PC-9 (cell line): ENCODE measurements at regions of chr11 and their contacts with region 1.

Region 1: DNA sequence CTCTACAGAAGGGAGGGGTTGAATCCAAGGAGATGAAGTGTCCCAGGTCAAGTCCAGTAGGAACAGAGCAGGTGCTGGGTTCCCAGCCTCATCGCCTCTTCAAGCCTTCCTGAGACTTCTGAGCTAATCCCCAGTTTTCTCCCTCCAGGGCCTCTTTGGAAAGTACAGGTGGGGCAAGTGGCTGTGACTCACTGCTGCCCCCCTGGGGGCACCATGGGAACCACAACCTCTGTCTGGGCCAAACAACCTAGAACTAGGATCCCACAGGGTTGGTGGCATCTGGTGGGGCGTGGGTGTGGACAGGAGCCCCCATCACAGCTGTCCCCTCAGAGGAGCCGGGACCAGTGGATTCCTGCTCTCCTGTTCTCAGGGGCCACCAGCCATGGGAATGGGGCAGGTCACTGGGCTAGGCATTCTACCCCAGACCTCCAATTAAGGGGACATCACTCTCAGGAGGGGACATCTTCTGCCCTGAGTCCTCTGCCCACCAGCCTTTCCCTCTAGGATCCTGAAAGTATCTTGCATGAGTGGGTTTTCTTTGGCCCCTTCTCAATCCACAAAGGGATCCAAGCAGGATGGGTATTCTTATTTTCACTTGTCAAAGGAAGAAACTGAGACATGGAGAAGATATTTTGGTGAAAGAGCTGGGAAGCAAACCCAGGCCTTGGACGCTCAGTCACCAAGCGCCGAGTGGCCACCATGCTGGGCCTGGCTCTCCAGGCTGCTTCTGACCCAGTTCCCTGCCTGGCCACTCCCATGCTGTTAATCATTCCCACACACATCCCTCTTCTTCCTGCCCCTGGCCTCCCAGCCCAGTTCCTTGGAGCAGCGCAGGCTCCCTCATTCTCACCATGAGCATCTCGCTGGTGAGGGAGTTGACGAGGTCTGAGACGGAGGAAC is 23.8 kb downstream of the LRRC10B start:
- DNase-seq: peak in 1 of 2 experiments; percentile 69
- H3K4me3 ChIP-seq: no peak overlapping the region
- H3K27ac ChIP-seq: no peak overlapping the region
- H3K4me1 ChIP-seq: no peaks in the 10 kb centered on the region
- H3K27me3 ChIP-seq: peaks cover 22% of the 10 kb centered on the region; the same call in 1 of the 2 replicates
- CTCF ChIP-seq: peak; percentile 94

Region 2: DNA sequence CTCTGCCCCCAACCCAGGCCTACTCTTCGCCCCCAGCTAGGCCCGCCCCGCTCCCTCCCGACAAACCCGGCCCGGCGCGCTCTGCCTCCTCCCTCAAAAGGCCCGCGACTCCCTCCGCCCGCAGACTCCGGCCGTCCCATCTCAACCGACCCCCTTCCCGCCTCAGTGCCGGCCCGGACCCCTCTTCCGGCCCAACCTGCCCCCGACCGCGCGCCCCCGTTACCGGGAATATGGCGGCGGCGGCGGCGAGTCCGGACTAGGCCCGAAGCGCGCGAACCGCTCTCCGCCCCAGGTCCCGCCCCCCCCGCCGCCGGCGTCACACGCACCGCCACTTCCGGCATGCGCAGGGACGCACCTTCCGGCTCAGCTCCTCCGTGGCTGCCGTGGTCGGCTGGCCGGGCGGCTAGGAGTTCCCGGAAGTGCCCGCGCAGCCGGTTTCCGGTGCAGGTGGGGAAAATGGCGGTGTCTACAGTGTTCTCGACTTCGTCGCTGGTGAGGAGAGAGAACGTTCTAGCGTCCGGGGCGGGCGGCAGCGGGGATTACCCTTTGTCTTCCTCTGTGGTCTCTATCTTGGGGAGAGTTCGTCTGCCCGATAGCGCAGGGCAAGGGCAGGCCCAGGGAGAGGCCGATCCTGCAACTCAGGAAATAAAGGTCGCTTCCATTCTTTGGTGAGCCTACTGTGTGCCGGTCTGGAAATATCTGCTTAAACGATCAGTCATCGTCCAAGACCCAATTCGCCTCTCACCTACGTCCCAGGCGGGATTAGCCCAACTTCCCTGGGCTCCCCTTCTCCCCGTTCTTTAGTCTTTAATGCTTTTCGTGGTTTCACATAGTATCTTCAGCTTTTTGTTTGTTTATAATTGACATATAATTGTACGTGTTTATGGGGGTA is 102.5 kb before region 1 on chr11 and contains the starts of genes CPSF7 and SDHAF2:
- CTCF ChIA-PET with region 1: no interaction called
- POLR2A ChIA-PET with region 1: interaction called, 10 read pairs
- intact Hi-C with region 1: no loop called
- DNase-seq: peak; percentile 89 to 97
- H3K4me3 ChIP-seq: peak within 1 kb of the TSS; percentile 97
- H3K27ac ChIP-seq: peak within 1 kb of the TSS; percentile 86
- H3K4me1 ChIP-seq: peaks cover 33% of the 10 kb centered on the region
- H3K27me3 ChIP-seq: no peaks in the 10 kb centered on the region
- CTCF ChIP-seq: 0 out of 2 replicates have a peak, but pooled peaks have one; percentile 9
- total RNA-seq, gene CPSF7: 82.7 and 87.0 TPM in 2 replicates
- total RNA-seq, gene SDHAF2: 32.5 and 38.3 TPM in 2 replicates

Region 3: GRCh38 chr11:61446211-61446651 is 86.2 kb before region 1 on chr11:
- CTCF ChIA-PET with region 1: interaction called, 9 read pairs
- POLR2A ChIA-PET with region 1: no interaction called
- intact Hi-C with region 1: loop called (anchors 1 kb)
- DNase-seq: peak; percentile 82 to 90
- H3K4me3 ChIP-seq: no peak overlapping the region
- H3K27ac ChIP-seq: no peak overlapping the region
- H3K4me1 ChIP-seq: no peaks in the 10 kb centered on the region
- H3K27me3 ChIP-seq: no peaks in the 10 kb centered on the region
- CTCF ChIP-seq: peak; percentile 91

Region 4: DNA sequence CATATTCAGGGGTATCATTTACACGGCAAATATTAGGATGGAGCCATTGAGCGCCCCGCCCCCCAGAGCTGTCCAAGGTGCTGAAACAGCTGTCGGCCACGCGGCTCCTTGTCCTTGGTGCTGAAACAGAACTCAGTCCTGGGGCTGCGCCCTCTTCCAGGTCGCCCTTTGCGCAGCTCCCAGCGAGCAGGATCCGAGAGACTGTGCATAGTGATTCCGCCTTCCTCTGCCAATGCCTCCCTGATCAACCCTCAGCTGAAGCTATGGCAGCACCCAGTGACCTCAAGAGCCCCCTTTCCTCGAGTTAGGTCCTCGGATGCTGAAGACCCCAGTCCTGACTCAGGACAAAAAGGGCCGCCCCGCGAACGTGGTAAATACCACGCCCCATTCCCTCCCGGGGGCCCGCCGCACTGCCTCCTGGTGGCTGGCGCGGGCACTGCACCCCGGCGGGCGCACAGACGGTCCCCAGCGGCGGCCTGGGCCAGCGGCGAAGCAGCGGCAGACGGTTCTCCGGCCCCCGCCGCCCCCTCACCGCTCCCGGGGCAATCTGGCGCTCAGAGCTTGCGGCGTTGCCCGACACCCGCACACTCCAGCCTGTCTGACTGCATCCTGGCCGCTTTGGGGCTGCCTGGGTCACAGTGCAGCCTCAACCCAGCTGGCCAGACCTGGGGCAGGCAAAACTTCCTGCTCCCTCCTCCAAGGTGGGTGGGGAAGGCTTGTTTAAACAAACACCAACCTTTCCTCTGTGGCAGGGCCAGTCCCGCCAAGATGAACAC is 35.1 kb after region 1 on chr11:
- CTCF ChIA-PET with region 1: no interaction called
- POLR2A ChIA-PET with region 1: no interaction called
- intact Hi-C with region 1: loop called (anchors 5 kb)
- DNase-seq: peak; percentile 78 to 86
- H3K4me3 ChIP-seq: peak overlapping the region; percentile 13; the same call in 1 of the 2 replicates
- H3K27ac ChIP-seq: no peak overlapping the region
- H3K4me1 ChIP-seq: peaks cover 7% of the 10 kb centered on the region; the same call in 1 of the 2 replicates
- H3K27me3 ChIP-seq: peaks cover 53% of the 10 kb centered on the region
- CTCF ChIP-seq: peak; percentile 96